CD4-positive, alpha-beta T cell (primary cell): ENCODE measurements at regions of chr4 and their contacts with region 1.

Region 1: DNA sequence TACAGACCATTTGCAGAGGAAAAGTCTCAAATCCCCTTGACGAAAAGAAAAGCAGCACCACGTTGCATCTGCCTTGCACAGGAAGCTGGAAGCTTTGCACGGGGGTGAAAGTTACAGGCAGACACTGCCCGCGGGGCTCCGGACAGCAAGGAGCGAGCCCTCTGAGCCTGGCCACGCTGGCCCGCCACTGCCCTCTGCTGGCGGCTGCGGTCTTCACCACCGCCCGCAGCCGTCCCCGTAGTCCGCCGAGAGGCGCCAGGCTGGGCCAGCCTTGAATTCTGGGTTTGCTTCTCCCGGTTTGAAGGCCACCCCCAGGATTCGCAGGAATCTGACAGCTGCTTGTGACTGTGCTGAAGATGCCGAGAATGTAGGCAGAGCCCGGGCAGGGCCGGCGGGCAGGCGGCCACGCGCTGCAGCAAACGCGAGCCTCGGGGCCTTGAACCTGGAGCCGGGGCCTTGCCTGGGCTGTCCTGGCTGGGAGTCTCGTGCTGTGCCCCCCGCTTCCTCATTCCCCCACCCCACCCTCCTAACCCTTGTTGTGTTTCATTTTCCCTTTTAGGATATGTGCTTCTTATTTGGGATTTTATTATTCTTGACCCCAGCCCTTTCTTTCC is 49.2 kb downstream of the ENPP6 start:
- DNase-seq: peak in 13 of 14 experiments; percentile 21 to 71 (median 34)
- ATAC-seq: peak; percentile 60
- H3K4me3 ChIP-seq: no peak overlapping the region
- H3K4me3 Mint-ChIP-seq: no peak overlapping the region
- H3K27ac ChIP-seq: no peak overlapping the region
- H3K27ac Mint-ChIP-seq: no peak overlapping the region
- H3K4me1 ChIP-seq: peaks cover 8% of the 10 kb centered on the region
- H3K4me1 Mint-ChIP-seq: no peaks in the 10 kb centered on the region
- H3K27me3 ChIP-seq: peaks cover 26 to 31% of the 10 kb centered on the region in 2 experiments
- H3K27me3 Mint-ChIP-seq: peaks cover 93% of the 10 kb centered on the region
- CTCF ChIP-seq: peak; percentile 80

Region 2: GRCh38 chr4:184190711-184191110 is 22.2 kb after region 1 on chr4:
- CTCF ChIA-PET with region 1: no interaction called
- POLR2A ChIA-PET with region 1: no interaction called
- intact Hi-C with region 1: no loop called
- DNase-seq: no peak
- ATAC-seq: no peak
- H3K4me3 ChIP-seq: no peak overlapping the region
- H3K4me3 Mint-ChIP-seq: no peak overlapping the region
- H3K27ac ChIP-seq: no peak overlapping the region
- H3K27ac Mint-ChIP-seq: no peak overlapping the region
- H3K4me1 ChIP-seq: no peaks in the 10 kb centered on the region
- H3K4me1 Mint-ChIP-seq: no peaks in the 10 kb centered on the region
- H3K27me3 ChIP-seq: no peaks in the 10 kb centered on the region
- H3K27me3 Mint-ChIP-seq: no peaks in the 10 kb centered on the region
- CTCF ChIP-seq: no peak

Region 3: DNA sequence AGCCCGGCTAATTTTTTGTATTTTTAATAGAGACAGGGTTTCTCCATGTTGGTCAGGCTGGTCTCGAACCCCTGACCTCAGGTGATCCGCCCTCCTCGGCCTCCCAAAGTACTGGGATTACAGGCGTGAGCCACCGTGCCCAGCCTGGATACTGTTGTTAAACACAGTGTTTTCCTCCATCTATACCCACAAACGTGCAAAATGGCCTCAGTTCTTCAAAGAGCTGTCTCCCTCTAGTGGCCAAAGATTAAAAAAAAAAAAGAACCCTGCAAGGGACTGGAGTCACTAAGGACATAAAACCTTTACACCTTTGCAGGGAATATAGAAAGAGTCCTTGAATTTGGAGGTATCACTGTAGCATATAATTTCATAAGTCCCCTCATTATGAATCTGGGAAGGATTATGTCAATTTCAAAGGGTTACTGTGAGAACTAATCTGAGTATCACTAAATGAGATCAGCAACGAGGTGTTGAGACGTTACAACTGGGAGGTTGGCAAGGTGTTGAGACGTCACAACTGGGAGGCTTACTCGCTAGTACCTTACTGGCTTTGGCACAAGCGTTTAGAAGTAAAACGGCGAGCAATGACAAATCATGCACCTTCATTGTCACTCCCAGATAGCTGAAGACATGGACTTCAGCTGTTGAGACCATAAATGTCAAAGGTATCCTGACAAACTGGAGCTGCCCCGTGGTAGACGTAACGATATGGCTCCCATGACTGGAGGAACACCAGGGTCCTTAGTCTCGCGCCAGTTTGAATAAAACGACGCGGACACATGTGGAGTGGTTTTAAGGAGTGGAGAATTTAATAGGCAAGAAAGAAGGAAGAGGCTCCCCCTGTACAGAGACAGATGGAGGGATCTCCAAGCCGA is 82.5 kb after region 1 on chr4:
- CTCF ChIA-PET with region 1: no interaction called
- POLR2A ChIA-PET with region 1: no interaction called
- intact Hi-C with region 1: loop called in 1 of 2 experiments (anchors 2 kb)
- DNase-seq: peak in 4 of 14 experiments; percentile 28 to 79 (median 68)
- ATAC-seq: peak; percentile 82
- H3K4me3 ChIP-seq: no peak overlapping the region
- H3K4me3 Mint-ChIP-seq: no peak overlapping the region
- H3K27ac ChIP-seq: no peak overlapping the region
- H3K27ac Mint-ChIP-seq: no peak overlapping the region
- H3K4me1 ChIP-seq: peaks cover 6% of the 10 kb centered on the region
- H3K4me1 Mint-ChIP-seq: no peaks in the 10 kb centered on the region
- H3K27me3 ChIP-seq: no peaks in the 10 kb centered on the region
- H3K27me3 Mint-ChIP-seq: no peaks in the 10 kb centered on the region
- CTCF ChIP-seq: peak; percentile 76